ENCODE measurements at regions of chr1 and their contacts with region 1.

Region 1: GRCh38 chr1:211698161-211699026 is 23.0 kb upstream of the NEK2 start:
- DNase-seq: peak; percentile 55
- ATAC-seq: peak; percentile 78
- H3K4me3 ChIP-seq: 0 out of 2 replicates have a peak overlapping the region, but pooled peaks have one; percentile 31
- H3K27ac ChIP-seq: no peak overlapping the region
- H3K4me1 ChIP-seq: peaks cover 40% of the 10 kb centered on the region
- H3K27me3 ChIP-seq: no peaks in the 10 kb centered on the region
- CTCF ChIP-seq: peak; percentile 98 to 99 (median 99); a peak in 5 of 6 replicates
- EP300 ChIP-seq: no peak
- POLR2A ChIP-seq: no peak
- RAD21 ChIP-seq: peak; percentile 93

Region 2: GRCh38 chr1:211680752-211681327 is 17.6 kb before region 1 on chr1:
- CTCF ChIA-PET with region 1: interaction called, 244 read pairs
- POLR2A ChIA-PET with region 1: interaction called, 66 read pairs
- RAD21 ChIA-PET with region 1: interaction called, 224 read pairs
- SMC1A ChIA-PET with region 1: interaction called, 311 read pairs
- in situ Hi-C with region 1: no loop called
- intact Hi-C with region 1: loop called (anchors 1 kb)
- DNase-seq: peak; percentile 80
- ATAC-seq: peak; percentile 84
- H3K4me3 ChIP-seq: no peak overlapping the region
- H3K27ac ChIP-seq: peak overlapping the region; percentile 38
- H3K4me1 ChIP-seq: peaks cover 16% of the 10 kb centered on the region
- H3K27me3 ChIP-seq: no peaks in the 10 kb centered on the region
- CTCF ChIP-seq: peak; percentile 66 to 87 (median 81); a peak in 5 of 6 replicates
- EP300 ChIP-seq: 0 out of 4 replicates have a peak, but pooled peaks of 1 of the 2 experiments have one; percentile 20
- POLR2A ChIP-seq: no peak
- RAD21 ChIP-seq: peak; percentile 88

Region 3: DNA sequence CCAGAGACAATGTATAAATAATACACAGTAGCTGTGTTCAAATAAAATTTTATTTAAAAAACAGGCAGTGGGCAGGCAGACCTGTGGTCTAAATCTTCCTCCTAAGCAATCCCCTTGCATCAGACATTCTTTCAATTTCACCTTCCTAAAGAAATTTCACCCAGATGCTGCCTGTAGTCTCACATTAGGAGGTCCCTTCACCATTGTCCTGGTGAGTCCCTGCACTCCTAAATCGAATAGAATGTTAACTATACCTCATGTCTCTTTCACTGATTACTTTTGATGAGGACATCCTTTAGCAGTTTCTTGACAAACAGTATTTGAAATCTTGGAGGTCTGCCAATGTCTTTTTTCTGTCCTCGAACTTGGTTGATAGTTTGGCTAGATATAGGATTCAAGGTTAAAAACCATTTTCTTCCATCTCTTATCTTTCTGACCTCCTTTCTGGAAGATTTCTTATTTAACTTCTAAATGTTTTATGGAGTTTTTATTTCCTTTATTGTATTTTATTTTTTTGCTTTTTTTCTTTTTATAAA is 54.6 kb after region 1 on chr1:
- CTCF ChIA-PET with region 1: interaction called, 8 read pairs
- POLR2A ChIA-PET with region 1: no interaction called
- RAD21 ChIA-PET with region 1: interaction called, 9 read pairs
- SMC1A ChIA-PET with region 1: interaction called, 23 read pairs
- in situ Hi-C with region 1: no loop called
- intact Hi-C with region 1: no loop called
- DNase-seq: no peak
- ATAC-seq: no peak; the same call in 2 of the 3 replicates
- H3K4me3 ChIP-seq: no peak overlapping the region
- H3K27ac ChIP-seq: no peak overlapping the region
- H3K4me1 ChIP-seq: peaks cover 3% of the 10 kb centered on the region; the same call in 1 of the 2 replicates
- H3K27me3 ChIP-seq: no peaks in the 10 kb centered on the region
- CTCF ChIP-seq: no peak
- EP300 ChIP-seq: no peak
- POLR2A ChIP-seq: no peak
- RAD21 ChIP-seq: no peak

Region 4: GRCh38 chr1:211830330-211831142 is 132.1 kb after region 1 on chr1 and contains the start of gene LPGAT1:
- CTCF ChIA-PET with region 1: interaction called, 59 read pairs
- POLR2A ChIA-PET with region 1: interaction called, 30 read pairs
- RAD21 ChIA-PET with region 1: interaction called, 85 read pairs
- SMC1A ChIA-PET with region 1: interaction called, 90 read pairs
- in situ Hi-C with region 1: loop called (anchors 5 kb)
- intact Hi-C with region 1: loop called (anchors 2 kb)
- DNase-seq: no peak
- ATAC-seq: peak; percentile 82
- H3K4me3 ChIP-seq: peak within 1 kb of the TSS; percentile 98
- H3K27ac ChIP-seq: peak within 1 kb of the TSS; percentile 85
- H3K4me1 ChIP-seq: peaks cover 28% of the 10 kb centered on the region
- H3K27me3 ChIP-seq: no peaks in the 10 kb centered on the region
- CTCF ChIP-seq: peak; percentile 50 to 63 (median 53); a peak in 5 of 6 replicates
- EP300 ChIP-seq: no peak
- POLR2A ChIP-seq: peak; percentile 75
- RAD21 ChIP-seq: peak; percentile 25; the same call in 1 of the 2 replicates
- polyA plus RNA-seq, gene LPGAT1: 5.8 to 6.4 TPM

Region 5: GRCh38 chr1:211985556-211986264 is 287.3 kb after region 1 on chr1:
- CTCF ChIA-PET with region 1: interaction called, 32 read pairs
- POLR2A ChIA-PET with region 1: interaction called, 38 read pairs
- RAD21 ChIA-PET with region 1: interaction called, 42 read pairs
- SMC1A ChIA-PET with region 1: interaction called, 53 read pairs
- in situ Hi-C with region 1: no loop called
- intact Hi-C with region 1: loop called (anchors 5 kb)
- DNase-seq: peak; percentile 82
- ATAC-seq: peak; percentile 99
- H3K4me3 ChIP-seq: no peak overlapping the region
- H3K27ac ChIP-seq: peak overlapping the region; percentile 88
- H3K4me1 ChIP-seq: peaks cover 16% of the 10 kb centered on the region
- H3K27me3 ChIP-seq: no peaks in the 10 kb centered on the region
- CTCF ChIP-seq: no peak
- EP300 ChIP-seq: peak in 1 of 2 experiments; percentile 52; a peak in 1 of 4 replicates
- POLR2A ChIP-seq: no peak; the same call in 1 of the 2 replicates
- RAD21 ChIP-seq: no peak

Region 6: GRCh38 chr1:212062832-212063438 is 364.5 kb after region 1 on chr1:
- CTCF ChIA-PET with region 1: interaction called, 10 read pairs
- POLR2A ChIA-PET with region 1: no interaction called
- RAD21 ChIA-PET with region 1: interaction called, 5 read pairs
- SMC1A ChIA-PET with region 1: interaction called, 15 read pairs
- in situ Hi-C with region 1: no loop called
- intact Hi-C with region 1: no loop called
- DNase-seq: no peak
- ATAC-seq: peak; percentile 83
- H3K4me3 ChIP-seq: no peak overlapping the region
- H3K27ac ChIP-seq: no peak overlapping the region
- H3K4me1 ChIP-seq: no peaks in the 10 kb centered on the region
- H3K27me3 ChIP-seq: no peaks in the 10 kb centered on the region
- CTCF ChIP-seq: peak; percentile 54 to 63 (median 56); a peak in 5 of 6 replicates
- EP300 ChIP-seq: no peak
- POLR2A ChIP-seq: no peak
- RAD21 ChIP-seq: peak; percentile 59